ENCODE measurements at regions of chr7 and their contacts with region 1.

Region 1: GRCh38 chr7:12686894-12687717 is at the start of gene ARL4A:
- DNase-seq: peak; percentile 93 to 99 (median 98)

Region 2: GRCh38 chr7:12866207-12866606 is 179.1 kb after region 1 on chr7:
- intact Hi-C with region 1: no loop called
- DNase-seq: no peak

Region 3: DNA sequence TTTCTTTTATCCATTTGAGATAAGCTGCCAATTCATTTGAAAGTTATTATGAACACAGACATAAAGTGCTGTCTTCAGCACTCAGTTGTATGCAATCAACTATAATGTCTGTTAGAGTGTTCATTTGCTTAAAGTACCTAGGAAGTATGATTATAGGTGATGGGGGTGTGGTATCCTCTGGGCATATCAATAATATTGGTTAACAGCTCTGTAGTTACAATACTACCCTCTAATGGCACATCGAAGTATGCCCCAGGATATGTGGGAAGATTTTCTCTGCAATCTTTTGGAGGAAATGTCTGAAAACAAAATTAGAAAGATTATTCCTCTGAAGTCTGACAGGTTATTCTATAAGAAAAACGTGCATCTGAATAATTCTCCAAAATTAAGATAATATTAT is 430.0 kb after region 1 on chr7:
- intact Hi-C with region 1: loop called (anchors 10 kb)
- DNase-seq: peak in 1 of 42 donors; percentile 7